Ascending aorta (tissue), 2 donors: ENCODE measurements at regions of chr4 and their contacts with region 1.

Region 1: GRCh38 chr4:27318743-27319142 is 458.1 kb downstream of the STIM2 start:
- DNase-seq: peak in 1 of 2 donors; percentile 71
- H3K4me3 ChIP-seq: no peak overlapping the region
- H3K27ac ChIP-seq: no peak overlapping the region
- H3K4me1 ChIP-seq: peaks cover 0 to 6% of the 10 kb centered on the region in 2 donors
- H3K27me3 ChIP-seq: no peaks in the 10 kb centered on the region
- CTCF ChIP-seq: peak; percentile 34 to 53 (median 42)

Region 2: DNA sequence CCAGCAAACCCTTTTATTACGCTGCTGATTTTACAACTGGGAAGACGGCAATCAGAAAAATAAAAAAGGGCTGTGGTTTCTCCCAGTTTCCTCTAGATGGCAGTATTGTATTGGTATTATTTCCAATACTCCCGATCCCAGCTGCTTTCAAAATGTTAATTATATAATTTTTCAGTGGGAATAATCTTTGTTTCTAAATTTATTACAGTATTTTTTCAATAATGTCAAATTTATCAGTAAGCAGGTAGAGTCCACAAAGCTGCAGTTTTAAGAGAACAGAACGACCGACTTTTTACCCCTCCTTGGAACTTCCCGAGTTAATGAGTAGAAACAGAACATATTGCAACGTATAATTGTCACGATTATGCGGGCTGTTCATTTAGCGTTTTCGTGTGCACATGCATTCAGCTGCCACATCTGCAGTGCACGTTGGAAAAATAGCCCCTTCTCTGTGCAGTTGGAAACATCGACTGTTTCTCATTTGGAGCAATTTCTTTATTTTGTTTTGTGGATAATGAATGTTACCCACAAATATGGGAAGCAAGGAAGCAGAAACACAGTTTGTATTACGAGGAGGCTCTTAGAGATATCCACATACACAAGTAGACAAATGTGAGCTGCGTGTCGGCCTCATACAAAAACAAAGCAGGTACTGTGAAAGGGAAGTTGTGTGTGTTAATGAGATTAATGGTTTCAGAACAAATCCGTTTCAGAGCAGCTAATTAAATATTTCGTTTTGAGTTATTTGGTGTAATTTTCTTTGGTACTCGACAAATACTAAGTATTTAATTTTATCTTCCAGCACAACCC is 270.1 kb before region 1 on chr4:
- intact Hi-C with region 1: loop called (anchors 10 kb)
- DNase-seq: no peak
- H3K4me3 ChIP-seq: peak overlapping the region; percentile 29 to 41
- H3K27ac ChIP-seq: no peak overlapping the region
- H3K4me1 ChIP-seq: no peaks in the 10 kb centered on the region
- H3K27me3 ChIP-seq: no peaks in the 10 kb centered on the region
- CTCF ChIP-seq: peak in 2 of 3 experiments; percentile 69 to 72

Region 3: GRCh38 chr4:27176400-27176799 is 142.3 kb before region 1 on chr4:
- intact Hi-C with region 1: loop called (anchors 1 kb)
- DNase-seq: peak in 1 of 2 donors; percentile 63
- H3K4me3 ChIP-seq: no peak overlapping the region
- H3K27ac ChIP-seq: no peak overlapping the region
- H3K4me1 ChIP-seq: peaks cover 2 to 6% of the 10 kb centered on the region in 2 donors
- H3K27me3 ChIP-seq: no peaks in the 10 kb centered on the region
- CTCF ChIP-seq: peak; percentile 17 to 68 (median 66)